ENCODE measurements at regions of chr20 and their contacts with region 1.

Region 1: GRCh38 chr20:49278036-49278817 is at the start of gene ZNFX1:
- DNase-seq: peak; percentile 96
- ATAC-seq: peak; percentile 81
- H3K4me3 Mint-ChIP-seq: peak within 1 kb of the TSS; percentile 98
- H3K27ac Mint-ChIP-seq: peak within 1 kb of the TSS; percentile 98
- H3K4me1 Mint-ChIP-seq: peaks cover 66% of the 10 kb centered on the region
- H3K27me3 Mint-ChIP-seq: no peaks in the 10 kb centered on the region
- CTCF ChIP-seq: no peak
- total RNA-seq, gene ZNFX1: 49.6 and 51.9 TPM in 2 replicates

Region 2: GRCh38 chr20:47725248-47725973 is 1552.8 kb before region 1 on chr20:
- CTCF ChIA-PET with region 1: no interaction called
- POLR2A ChIA-PET with region 1: no interaction called
- intact Hi-C with region 1: loop called (anchors 2 kb)
- DNase-seq: peak; percentile 65
- ATAC-seq: peak; percentile 31
- H3K4me3 Mint-ChIP-seq: no peak overlapping the region
- H3K27ac Mint-ChIP-seq: no peak overlapping the region
- H3K4me1 Mint-ChIP-seq: peaks cover 50% of the 10 kb centered on the region
- H3K27me3 Mint-ChIP-seq: no peaks in the 10 kb centered on the region
- CTCF ChIP-seq: no peak

Region 3: GRCh38 chr20:48682529-48683251 is 595.5 kb before region 1 on chr20:
- CTCF ChIA-PET with region 1: no interaction called
- POLR2A ChIA-PET with region 1: no interaction called
- intact Hi-C with region 1: no loop called
- DNase-seq: no peak
- ATAC-seq: no peak
- H3K4me3 Mint-ChIP-seq: no peak overlapping the region
- H3K27ac Mint-ChIP-seq: no peak overlapping the region
- H3K4me1 Mint-ChIP-seq: no peaks in the 10 kb centered on the region
- H3K27me3 Mint-ChIP-seq: no peaks in the 10 kb centered on the region
- CTCF ChIP-seq: no peak

Region 4: DNA sequence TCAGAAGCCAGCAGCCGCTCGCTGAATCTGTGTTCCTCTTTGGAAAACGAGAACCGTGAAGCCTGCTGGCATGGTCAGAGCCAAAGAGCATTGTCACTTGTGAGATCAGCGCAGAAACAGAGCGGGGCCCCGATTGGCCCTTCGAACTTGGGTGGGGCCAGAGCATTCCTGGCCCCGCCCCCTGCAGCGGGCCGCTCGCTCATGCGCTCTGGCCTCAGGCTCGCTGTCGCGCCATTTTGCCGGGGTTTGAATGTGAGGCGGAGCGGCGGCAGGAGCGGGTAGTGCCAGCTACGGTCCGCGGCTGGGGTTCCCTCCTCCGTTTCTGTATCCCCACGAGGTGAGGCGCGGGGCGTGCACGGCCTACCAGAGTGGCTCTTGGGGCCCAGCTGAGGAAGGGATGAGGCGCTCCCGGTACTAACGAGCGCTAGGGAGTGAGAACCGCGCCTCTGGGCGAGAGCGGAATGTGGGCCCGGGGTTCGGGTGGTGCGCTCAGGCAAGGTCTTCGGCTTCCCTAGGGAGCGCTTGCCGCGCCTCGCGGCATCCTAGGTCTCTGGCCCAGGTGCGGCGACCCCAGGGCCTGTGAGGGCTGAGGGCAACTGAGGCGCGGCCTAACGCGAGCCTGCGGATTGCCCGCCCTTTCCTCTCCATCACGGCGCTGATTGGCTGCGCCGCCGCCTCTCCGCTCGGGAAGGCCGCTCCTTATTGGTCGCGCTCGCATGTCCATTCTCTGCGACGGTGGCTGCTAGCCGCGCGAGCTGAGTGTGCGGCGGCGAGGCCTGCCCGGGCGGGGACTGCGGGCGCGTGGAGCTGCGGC is 231.9 kb before region 1 on chr20 and contains the start of gene CSE1L:
- CTCF ChIA-PET with region 1: no interaction called
- POLR2A ChIA-PET with region 1: interaction called, 10 read pairs
- intact Hi-C with region 1: loop called (anchors 1 kb)
- DNase-seq: peak; percentile 95
- ATAC-seq: peak; percentile 86
- H3K4me3 Mint-ChIP-seq: peak within 1 kb of the TSS; percentile 97
- H3K27ac Mint-ChIP-seq: peak within 1 kb of the TSS; percentile 94
- H3K4me1 Mint-ChIP-seq: peaks cover 31% of the 10 kb centered on the region
- H3K27me3 Mint-ChIP-seq: no peaks in the 10 kb centered on the region
- CTCF ChIP-seq: no peak
- total RNA-seq, gene CSE1L: 53.2 and 58.8 TPM in 2 replicates

Region 5: GRCh38 chr20:49219089-49219923 is 58.9 kb before region 1 on chr20 and contains the start of gene DDX27:
- CTCF ChIA-PET with region 1: interaction called, 8 read pairs
- POLR2A ChIA-PET with region 1: interaction called, 23 read pairs
- intact Hi-C with region 1: loop called (anchors 1 kb)
- DNase-seq: peak; percentile 93
- ATAC-seq: peak; percentile 84
- H3K4me3 Mint-ChIP-seq: peak within 1 kb of the TSS; percentile 94
- H3K27ac Mint-ChIP-seq: peak within 1 kb of the TSS; percentile 93
- H3K4me1 Mint-ChIP-seq: peaks cover 28% of the 10 kb centered on the region
- H3K27me3 Mint-ChIP-seq: no peaks in the 10 kb centered on the region
- CTCF ChIP-seq: no peak
- total RNA-seq, gene DDX27: 76.5 and 78.4 TPM in 2 replicates

Region 6: GRCh38 chr20:49915378-49916145 is 637.3 kb after region 1 on chr20 and contains the start of gene SPATA2:
- CTCF ChIA-PET with region 1: no interaction called
- POLR2A ChIA-PET with region 1: interaction called, 15 read pairs
- intact Hi-C with region 1: no loop called
- DNase-seq: peak; percentile 95
- ATAC-seq: peak; percentile 80
- H3K4me3 Mint-ChIP-seq: peak within 1 kb of the TSS; percentile 97
- H3K27ac Mint-ChIP-seq: peak within 1 kb of the TSS; percentile 99
- H3K4me1 Mint-ChIP-seq: peaks cover 34% of the 10 kb centered on the region
- H3K27me3 Mint-ChIP-seq: no peaks in the 10 kb centered on the region
- CTCF ChIP-seq: no peak
- total RNA-seq, gene SPATA2: 9.1 and 9.4 TPM in 2 replicates